CD8-positive, alpha-beta T cell (primary cell): ENCODE measurements at regions of chr5 and their contacts with region 1.

Region 1: GRCh38 chr5:119315516-119315949 is 40.3 kb upstream of the TNFAIP8 start:
- DNase-seq: peak in 7 of 9 experiments; percentile 41 to 86 (median 69)
- ATAC-seq: peak; percentile 87
- H3K4me3 ChIP-seq: no peak overlapping the region
- H3K4me3 Mint-ChIP-seq: peak overlapping the region; percentile 37
- H3K27ac ChIP-seq: peak overlapping the region; percentile 25 to 62
- H3K27ac Mint-ChIP-seq: peak overlapping the region; percentile 91
- H3K4me1 ChIP-seq: peaks cover 94% of the 10 kb centered on the region
- H3K4me1 Mint-ChIP-seq: peaks cover 92% of the 10 kb centered on the region
- H3K27me3 ChIP-seq: no peaks in the 10 kb centered on the region
- H3K27me3 Mint-ChIP-seq: no peaks in the 10 kb centered on the region
- CTCF ChIP-seq: peak; percentile 74

Region 2: DNA sequence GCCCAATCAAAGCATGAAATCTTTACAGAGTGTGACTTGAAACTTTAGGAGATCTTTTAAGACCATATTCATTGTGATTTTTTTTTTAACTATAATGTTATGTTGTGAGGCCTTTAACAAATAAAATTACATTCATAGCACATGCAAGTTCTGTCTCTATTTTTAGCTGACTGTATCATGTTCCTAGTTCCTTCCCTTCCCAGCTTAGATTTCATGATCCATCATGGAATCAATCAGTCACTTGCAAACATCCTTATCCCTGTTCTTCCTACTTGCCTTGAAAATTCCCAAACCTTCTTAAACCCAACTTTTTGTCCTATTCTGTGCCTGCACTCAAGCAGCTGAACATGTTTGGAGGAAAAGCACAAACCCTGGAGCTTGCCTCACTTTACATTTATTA is 102.9 kb before region 1 on chr5:
- CTCF ChIA-PET with region 1: no interaction called
- POLR2A ChIA-PET with region 1: no interaction called
- intact Hi-C with region 1: no loop called
- DNase-seq: no peak
- ATAC-seq: no peak
- H3K4me3 ChIP-seq: no peak overlapping the region
- H3K4me3 Mint-ChIP-seq: no peak overlapping the region
- H3K27ac ChIP-seq: no peak overlapping the region
- H3K27ac Mint-ChIP-seq: no peak overlapping the region
- H3K4me1 ChIP-seq: no peaks in the 10 kb centered on the region
- H3K4me1 Mint-ChIP-seq: no peaks in the 10 kb centered on the region
- H3K27me3 ChIP-seq: no peaks in the 10 kb centered on the region
- H3K27me3 Mint-ChIP-seq: no peaks in the 10 kb centered on the region
- CTCF ChIP-seq: no peak

Region 3: GRCh38 chr5:119290161-119290569 is 25.4 kb before region 1 on chr5:
- CTCF ChIA-PET with region 1: interaction called, 16 read pairs
- POLR2A ChIA-PET with region 1: interaction called, 7 read pairs
- intact Hi-C with region 1: no loop called
- DNase-seq: peak in 2 of 9 experiments; percentile 41 to 68
- ATAC-seq: peak; percentile 27
- H3K4me3 ChIP-seq: peak overlapping the region; percentile 9 to 10
- H3K4me3 Mint-ChIP-seq: peak overlapping the region; percentile 69
- H3K27ac ChIP-seq: peak overlapping the region; percentile 9 to 83
- H3K27ac Mint-ChIP-seq: peak overlapping the region; percentile 97
- H3K4me1 ChIP-seq: peaks cover 75% of the 10 kb centered on the region
- H3K4me1 Mint-ChIP-seq: peaks cover 86% of the 10 kb centered on the region
- H3K27me3 ChIP-seq: no peaks in the 10 kb centered on the region
- H3K27me3 Mint-ChIP-seq: no peaks in the 10 kb centered on the region
- CTCF ChIP-seq: no peak

Region 4: DNA sequence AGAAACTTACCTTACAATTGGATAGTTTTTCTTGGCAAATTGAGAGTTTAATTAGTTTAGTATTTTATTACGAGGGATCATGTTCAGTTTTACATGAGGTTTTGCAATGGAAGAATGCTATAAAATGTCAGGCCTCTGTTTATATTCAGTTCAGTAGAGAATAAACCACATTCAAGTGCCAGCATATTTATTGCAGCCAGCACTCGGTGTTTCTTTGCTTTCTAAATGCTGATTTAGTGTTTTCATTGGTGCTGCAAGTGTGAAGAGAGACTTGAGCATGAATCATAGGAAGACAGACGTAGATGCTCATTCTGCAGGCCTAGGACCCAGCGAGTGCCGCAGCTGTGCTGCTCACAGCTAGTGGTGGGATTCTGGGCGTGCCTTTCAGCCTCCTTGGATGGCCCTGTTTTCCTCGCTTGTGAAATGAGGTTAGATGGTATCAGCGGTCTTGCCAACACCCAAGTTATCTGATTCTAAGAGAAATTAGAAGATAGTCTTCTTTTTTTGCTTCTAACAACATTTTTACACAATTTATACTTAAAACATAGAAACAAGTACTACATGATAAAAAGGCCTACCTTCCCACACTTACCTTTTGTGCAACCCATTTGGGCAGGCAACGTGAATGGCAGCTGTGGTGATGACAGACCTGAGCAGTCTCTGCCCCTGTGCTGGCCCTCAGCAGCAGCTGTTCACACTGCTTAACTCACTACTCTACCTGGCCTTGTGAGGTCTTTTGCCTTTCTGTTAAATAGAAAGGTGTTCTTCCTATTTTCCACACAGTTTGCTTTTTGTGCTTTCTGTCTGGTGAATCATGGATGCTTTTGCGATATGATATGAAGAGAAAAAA is 13.4 kb after region 1 on chr5:
- CTCF ChIA-PET with region 1: interaction called, 10 read pairs
- POLR2A ChIA-PET with region 1: interaction called, 32 read pairs
- intact Hi-C with region 1: loop called in 1 of 2 experiments (anchors 1 kb)
- DNase-seq: peak in 8 of 9 experiments; percentile 34 to 88 (median 74)
- ATAC-seq: peak; percentile 70
- H3K4me3 ChIP-seq: no peak overlapping the region
- H3K4me3 Mint-ChIP-seq: peak overlapping the region; percentile 47
- H3K27ac ChIP-seq: peak overlapping the region; percentile 39 to 80
- H3K27ac Mint-ChIP-seq: peak overlapping the region; percentile 95
- H3K4me1 ChIP-seq: peaks cover 95% of the 10 kb centered on the region
- H3K4me1 Mint-ChIP-seq: peaks cover 94% of the 10 kb centered on the region
- H3K27me3 ChIP-seq: no peaks in the 10 kb centered on the region
- H3K27me3 Mint-ChIP-seq: no peaks in the 10 kb centered on the region
- CTCF ChIP-seq: no peak

Region 5: GRCh38 chr5:119355685-119356611 is 40.4 kb after region 1 on chr5 and contains the start of gene TNFAIP8:
- CTCF ChIA-PET with region 1: interaction called, 5 read pairs
- POLR2A ChIA-PET with region 1: interaction called, 4 read pairs
- intact Hi-C with region 1: loop called in 1 of 2 experiments (anchors 5 kb)
- DNase-seq: peak in 6 of 9 experiments; percentile 43 to 76 (median 55)
- ATAC-seq: peak; percentile 37
- H3K4me3 ChIP-seq: peak within 1 kb of the TSS; percentile 38 to 52
- H3K4me3 Mint-ChIP-seq: peak within 1 kb of the TSS; percentile 88
- H3K27ac ChIP-seq: peak within 1 kb of the TSS in 1 of 2 experiments; percentile 62
- H3K27ac Mint-ChIP-seq: peak within 1 kb of the TSS; percentile 95
- H3K4me1 ChIP-seq: peaks cover 84% of the 10 kb centered on the region
- H3K4me1 Mint-ChIP-seq: peaks cover 91% of the 10 kb centered on the region
- H3K27me3 ChIP-seq: no peaks in the 10 kb centered on the region
- H3K27me3 Mint-ChIP-seq: no peaks in the 10 kb centered on the region
- CTCF ChIP-seq: no peak
- total RNA-seq, gene TNFAIP8: 62.3 to 63.0 TPM